ENCODE measurements at regions of chr1 and their contacts with region 1.

Region 1: GRCh38 chr1:155001675-155002463 is 733 bp upstream of the ZBTB7B start:
- DNase-seq: peak; percentile 100
- ATAC-seq: peak; percentile 73
- H3K4me3 Mint-ChIP-seq: peak overlapping the region; percentile 88
- H3K27ac Mint-ChIP-seq: peak overlapping the region; percentile 57; the same call in 1 of the 2 replicates
- H3K4me1 Mint-ChIP-seq: peaks cover 39% of the 10 kb centered on the region
- H3K27me3 Mint-ChIP-seq: no peaks in the 10 kb centered on the region; the same call in 1 of the 2 replicates
- CTCF ChIP-seq: no peak

Region 2: DNA sequence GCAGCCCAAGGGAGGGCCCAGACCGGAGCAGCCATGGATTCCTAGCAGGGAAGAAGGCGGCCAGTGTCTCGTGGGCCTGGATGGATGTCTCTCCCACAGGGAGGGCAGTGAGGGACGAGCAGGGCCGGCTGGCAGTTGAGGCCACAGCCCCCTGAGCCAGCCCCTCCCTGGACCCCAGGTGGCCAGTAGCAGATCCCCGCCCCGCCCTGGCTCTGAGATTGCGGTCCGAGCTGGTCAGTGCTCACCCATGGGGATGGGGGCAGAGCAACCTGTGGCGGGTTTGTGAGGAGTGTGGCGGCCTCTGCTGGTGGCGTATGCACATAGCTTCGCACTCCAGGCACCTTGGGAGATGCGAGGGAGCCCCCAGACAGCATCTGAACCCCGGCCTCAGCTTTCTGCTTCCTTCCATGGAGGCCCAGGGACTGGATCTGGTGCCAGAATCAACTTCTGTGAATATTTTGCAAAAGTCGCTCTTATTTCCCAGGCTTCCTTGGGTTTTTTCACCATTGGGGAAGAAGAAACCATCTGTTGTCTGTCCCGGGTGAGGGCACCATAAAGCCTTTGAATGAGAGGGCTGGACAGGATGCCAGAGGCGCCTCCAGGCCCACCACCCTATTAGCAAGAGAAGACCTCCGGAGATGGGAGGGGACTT is 123.4 kb before region 1 on chr1:
- CTCF ChIA-PET with region 1: no interaction called
- POLR2A ChIA-PET with region 1: no interaction called
- DNase-seq: peak; percentile 94
- ATAC-seq: peak; percentile 95
- H3K4me3 Mint-ChIP-seq: no peak overlapping the region
- H3K27ac Mint-ChIP-seq: no peak overlapping the region
- H3K4me1 Mint-ChIP-seq: no peaks in the 10 kb centered on the region
- H3K27me3 Mint-ChIP-seq: no peaks in the 10 kb centered on the region
- CTCF ChIP-seq: peak; percentile 78

Region 3: GRCh38 chr1:154961497-154962262 is 40.2 kb before region 1 on chr1 and contains the start of gene PYGO2:
- CTCF ChIA-PET with region 1: interaction called, 176 read pairs
- POLR2A ChIA-PET with region 1: interaction called, 12 read pairs
- DNase-seq: peak; percentile 83
- ATAC-seq: peak; percentile 66
- H3K4me3 Mint-ChIP-seq: peak within 1 kb of the TSS; percentile 93
- H3K27ac Mint-ChIP-seq: peak within 1 kb of the TSS; percentile 91
- H3K4me1 Mint-ChIP-seq: peaks cover 32% of the 10 kb centered on the region
- H3K27me3 Mint-ChIP-seq: no peaks in the 10 kb centered on the region
- CTCF ChIP-seq: no peak
- total RNA-seq, gene PYGO2: 37.4 to 38.8 TPM (median 38.0 TPM) in 3 replicates

Region 4: DNA sequence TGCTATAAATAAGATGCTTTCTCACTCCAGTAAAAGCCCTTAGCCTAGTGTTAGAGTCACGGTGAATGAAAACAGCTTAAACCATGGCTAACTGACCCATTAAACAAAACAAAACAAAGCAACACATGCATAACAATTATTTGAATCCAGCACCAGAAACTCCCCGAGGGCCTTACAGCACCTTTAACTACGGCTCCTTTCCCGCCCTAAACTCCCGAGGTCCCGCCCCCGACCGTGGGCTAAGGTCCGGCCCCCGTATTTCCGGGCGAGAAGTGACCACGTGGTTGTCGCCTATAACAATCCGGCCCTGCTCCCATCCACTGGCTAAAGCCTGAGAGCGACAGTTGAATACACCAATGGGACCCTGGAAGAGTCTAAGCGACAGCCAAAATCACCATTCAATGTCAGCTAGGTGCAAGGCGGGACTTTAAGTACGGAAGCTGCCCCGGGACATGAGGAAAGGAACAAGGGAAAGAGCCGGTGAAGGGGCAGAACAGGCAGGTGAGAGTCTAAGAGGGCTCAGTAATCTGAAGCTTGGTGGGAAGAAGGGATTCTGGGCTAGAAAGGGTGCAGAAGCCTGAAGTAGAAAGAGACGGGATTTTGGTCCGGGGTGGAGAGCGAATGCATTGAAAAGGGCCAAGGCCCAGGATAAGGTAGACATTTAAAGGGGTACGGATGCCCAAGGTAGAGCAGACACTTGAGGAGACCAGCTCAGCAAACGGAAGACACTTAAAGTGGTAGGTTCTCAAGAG is 18.8 kb before region 1 on chr1 and contains the start of gene FLAD1:
- CTCF ChIA-PET with region 1: interaction called, 50 read pairs
- POLR2A ChIA-PET with region 1: interaction called, 21 read pairs
- DNase-seq: peak; percentile 98
- ATAC-seq: peak; percentile 99
- H3K4me3 Mint-ChIP-seq: no peak within 1 kb of the TSS
- H3K27ac Mint-ChIP-seq: peak within 1 kb of the TSS; percentile 70; the same call in 1 of the 2 replicates
- H3K4me1 Mint-ChIP-seq: peaks cover 10% of the 10 kb centered on the region
- H3K27me3 Mint-ChIP-seq: no peaks in the 10 kb centered on the region
- CTCF ChIP-seq: no peak
- total RNA-seq, gene FLAD1: 71.1 to 88.3 TPM (median 71.2 TPM) in 3 replicates

Region 5: DNA sequence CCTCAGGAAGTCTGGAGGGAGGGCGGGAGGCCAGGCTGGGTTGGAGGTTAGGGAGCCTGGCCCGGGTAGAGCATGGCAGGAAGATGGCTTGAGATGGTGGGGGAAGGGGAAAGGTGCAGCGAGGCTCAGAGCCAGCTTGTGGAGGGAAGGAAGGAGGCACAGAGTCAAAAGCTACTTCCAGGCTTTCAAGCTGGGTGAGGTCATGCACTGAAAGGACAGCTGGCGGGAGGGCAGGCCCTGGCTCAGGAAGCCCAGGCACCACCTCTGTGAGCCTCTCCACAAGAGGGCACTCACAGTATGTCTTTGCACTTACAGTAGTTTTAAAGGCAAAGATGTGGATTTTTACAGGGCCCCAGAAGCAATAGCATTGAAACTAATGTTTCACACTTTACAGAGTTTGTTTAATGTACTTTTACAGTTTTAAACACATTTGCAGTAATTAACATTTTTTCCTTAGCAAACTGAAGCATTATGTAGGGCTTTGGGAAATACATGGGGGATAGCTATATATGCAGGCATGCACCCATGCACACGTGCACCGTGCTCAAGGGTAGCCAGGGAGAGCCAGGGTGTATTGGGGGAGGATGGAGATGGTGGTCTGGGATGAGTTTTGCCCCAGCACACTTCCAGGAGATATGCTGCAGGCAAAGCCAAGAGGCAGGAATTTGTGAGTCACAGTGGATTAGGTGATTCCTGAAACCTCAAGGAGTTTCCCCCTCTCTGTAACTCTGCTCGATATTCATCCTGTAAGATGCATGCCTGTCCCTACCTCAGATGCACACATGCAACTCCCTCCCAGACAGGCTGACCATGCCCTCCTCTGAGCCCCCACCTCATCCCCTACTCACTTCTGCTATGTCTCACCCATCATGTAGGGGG is 43.2 kb after region 1 on chr1:
- CTCF ChIA-PET with region 1: interaction called, 29 read pairs
- POLR2A ChIA-PET with region 1: no interaction called
- DNase-seq: peak; percentile 77
- ATAC-seq: peak; percentile 92
- H3K4me3 Mint-ChIP-seq: no peak overlapping the region
- H3K27ac Mint-ChIP-seq: no peak overlapping the region
- H3K4me1 Mint-ChIP-seq: peaks cover 35% of the 10 kb centered on the region
- H3K27me3 Mint-ChIP-seq: no peaks in the 10 kb centered on the region; the same call in none of the 2 replicates
- CTCF ChIP-seq: no peak; the same call in 1 of the 2 replicates

Region 6: DNA sequence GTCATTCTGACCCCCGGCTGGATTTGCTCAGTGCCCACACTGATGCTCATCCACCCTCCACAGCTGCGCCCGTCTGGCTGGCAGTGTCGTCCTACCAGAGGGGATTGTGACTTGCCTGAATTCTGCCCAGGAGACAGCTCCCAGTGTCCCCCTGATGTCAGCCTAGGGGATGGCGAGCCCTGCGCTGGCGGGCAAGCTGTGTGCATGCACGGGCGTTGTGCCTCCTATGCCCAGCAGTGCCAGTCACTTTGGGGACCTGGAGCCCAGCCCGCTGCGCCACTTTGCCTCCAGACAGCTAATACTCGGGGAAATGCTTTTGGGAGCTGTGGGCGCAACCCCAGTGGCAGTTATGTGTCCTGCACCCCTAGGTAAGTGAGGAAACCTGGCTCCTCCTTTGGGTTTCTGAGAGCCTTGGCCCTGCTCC is 55.9 kb after region 1 on chr1:
- CTCF ChIA-PET with region 1: interaction called, 39 read pairs
- POLR2A ChIA-PET with region 1: interaction called, 6 read pairs
- DNase-seq: no peak
- ATAC-seq: no peak
- H3K4me3 Mint-ChIP-seq: no peak overlapping the region
- H3K27ac Mint-ChIP-seq: no peak overlapping the region
- H3K4me1 Mint-ChIP-seq: no peaks in the 10 kb centered on the region
- H3K27me3 Mint-ChIP-seq: peaks cover 4% of the 10 kb centered on the region
- CTCF ChIP-seq: no peak

Region 7: DNA sequence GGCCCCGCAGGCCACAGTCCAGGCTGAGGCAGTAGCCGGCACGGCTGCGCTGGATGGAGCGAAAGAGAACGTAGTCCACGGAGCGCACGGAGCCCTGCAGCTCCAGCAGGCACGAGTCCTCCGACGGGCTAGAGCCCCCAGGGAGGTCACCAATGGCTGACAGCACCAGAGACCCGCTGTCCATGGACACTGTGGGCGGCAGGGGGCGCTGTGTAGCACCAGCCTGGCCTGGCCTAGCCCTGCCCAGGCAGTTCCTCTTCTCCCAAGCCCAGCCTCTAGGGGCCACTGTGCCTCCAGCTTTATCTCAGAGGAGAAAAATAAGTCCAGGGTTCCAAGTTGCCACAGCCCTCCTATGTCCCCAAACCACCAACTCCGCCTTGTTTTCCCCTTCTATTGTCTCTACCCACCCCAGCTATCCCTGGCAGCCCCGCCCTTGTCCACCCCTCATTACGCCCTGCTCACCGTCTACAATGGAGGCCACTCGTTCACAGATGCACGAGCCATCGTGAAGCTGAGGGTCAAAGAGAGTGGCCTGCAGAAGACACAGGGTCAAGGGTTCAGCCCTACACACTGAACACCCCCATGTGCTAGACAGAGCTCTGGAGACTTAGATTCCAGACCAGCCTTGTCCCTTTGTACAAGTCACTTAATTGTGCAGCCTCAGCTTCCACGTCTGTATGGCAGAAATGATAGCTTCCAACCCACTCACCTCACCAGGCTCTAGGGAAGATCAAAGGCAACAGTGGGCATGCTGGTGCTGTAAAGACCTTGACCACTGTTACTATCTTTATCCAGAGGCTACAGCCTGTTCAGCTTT is 249.0 kb after region 1 on chr1:
- CTCF ChIA-PET with region 1: no interaction called
- POLR2A ChIA-PET with region 1: no interaction called
- DNase-seq: peak; percentile 99
- ATAC-seq: peak; percentile 87
- H3K4me3 Mint-ChIP-seq: peak overlapping the region; percentile 58
- H3K27ac Mint-ChIP-seq: peak overlapping the region; percentile 89
- H3K4me1 Mint-ChIP-seq: peaks cover 24% of the 10 kb centered on the region
- H3K27me3 Mint-ChIP-seq: peaks cover 16% of the 10 kb centered on the region
- CTCF ChIP-seq: peak; percentile 99

Measured in WTC11 (cell line).